Activated T-helper 1 cell treated with anti-CD3 and anti-CD28 coated beads, Interleukin-12 subunit alpha, Interleukin-12 subunit beta, Interleukin-2, Interleukin-4 antibody, amounts not matched to agents 30 ng/mL and 10 ng/mL and 1 ng/mL, durations not matched to agents 14 hours and 24 hours and 36 hours (primary cell): ENCODE measurements at regions of chr10 and their contacts with region 1.

Region 1: GRCh38 chr10:103265717-103266329 is 11.1 kb upstream of the INA start:
- DNase-seq: no peak
- H3K4me3 Mint-ChIP-seq: no peak overlapping the region
- H3K27ac Mint-ChIP-seq: no peak overlapping the region
- H3K4me1 Mint-ChIP-seq: peaks cover 6% of the 10 kb centered on the region
- H3K27me3 Mint-ChIP-seq: peaks cover 19% of the 10 kb centered on the region

Region 2: DNA sequence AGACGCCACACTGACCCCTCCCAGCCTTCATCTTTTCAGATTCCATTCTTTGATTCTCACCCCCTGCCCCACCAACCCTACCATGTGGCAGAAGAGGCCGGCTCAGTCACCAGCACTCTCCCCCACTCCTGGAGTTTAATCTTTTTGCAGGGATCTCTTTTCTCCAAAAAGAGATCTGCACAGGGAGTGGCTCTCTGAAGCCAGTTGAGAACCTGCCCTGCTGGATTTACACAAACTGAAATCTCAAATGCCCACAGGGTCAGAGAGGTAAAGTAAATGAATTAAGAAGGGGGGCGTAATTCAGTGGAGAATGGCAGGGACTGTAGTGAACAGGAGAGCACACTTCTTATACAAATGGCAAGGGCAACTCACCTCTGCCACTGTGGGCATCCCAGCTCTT is 10.0 kb after region 1 on chr10:
- intact Hi-C with region 1: loop called (anchors 1 kb)
- DNase-seq: no peak
- H3K4me3 Mint-ChIP-seq: no peak overlapping the region
- H3K27ac Mint-ChIP-seq: no peak overlapping the region
- H3K4me1 Mint-ChIP-seq: peaks cover 8% of the 10 kb centered on the region
- H3K27me3 Mint-ChIP-seq: peaks cover 38% of the 10 kb centered on the region